ENCODE measurements at regions of chr12 and their contacts with region 1.

Region 1: DNA sequence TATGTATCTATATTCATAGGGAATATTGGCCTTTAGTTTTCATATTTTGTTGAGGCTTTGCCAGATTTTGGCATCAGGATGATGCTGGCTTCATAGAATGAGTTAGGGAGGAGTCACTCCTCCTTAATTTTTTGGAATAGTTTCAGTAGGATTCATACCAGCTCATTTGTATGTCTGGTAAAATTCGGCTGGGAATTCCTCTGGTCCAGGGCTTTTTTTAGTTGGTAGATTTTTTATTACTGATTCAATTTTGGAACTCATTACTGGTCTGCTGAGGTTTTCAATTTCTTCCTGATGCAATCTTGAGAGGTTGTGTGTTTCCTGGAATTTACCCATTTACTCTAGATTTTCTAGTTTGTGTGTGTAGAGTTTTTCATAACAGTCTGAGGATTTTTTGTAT is 175.2 kb downstream of the EPS8 start:
- DNase-seq: no peak
- H3K4me3 ChIP-seq: no peak overlapping the region
- H3K27ac ChIP-seq: no peak overlapping the region
- H3K4me1 ChIP-seq: peaks cover 0 to 6% (median 0%) of the 10 kb centered on the region in 4 donors
- H3K27me3 ChIP-seq: no peaks in the 10 kb centered on the region
- CTCF ChIP-seq: no peak

Region 2: GRCh38 chr12:15505616-15506015 is 108.4 kb before region 1 on chr12:
- intact Hi-C with region 1: no loop called
- DNase-seq: no peak
- H3K4me3 ChIP-seq: no peak overlapping the region
- H3K27ac ChIP-seq: no peak overlapping the region
- H3K4me1 ChIP-seq: no peaks in the 10 kb centered on the region
- H3K27me3 ChIP-seq: no peaks in the 10 kb centered on the region
- CTCF ChIP-seq: no peak

Region 3: GRCh38 chr12:15830538-15830937 is 216.6 kb after region 1 on chr12:
- intact Hi-C with region 1: loop called (anchors 5 kb)
- DNase-seq: no peak
- H3K4me3 ChIP-seq: no peak overlapping the region
- H3K27ac ChIP-seq: peak overlapping the region; percentile 53 to 63
- H3K4me1 ChIP-seq: peaks cover 0 to 24% (median 4%) of the 10 kb centered on the region in 4 donors
- H3K27me3 ChIP-seq: no peaks in the 10 kb centered on the region
- CTCF ChIP-seq: no peak

Measured in tibial artery (tissue), 4 donors.